ENCODE measurements at regions of chr18 and their contacts with region 1.

Region 1: GRCh38 chr18:46173393-46174341 is 69.5 kb downstream of the HAUS1 start:
- DNase-seq: peak; percentile 95
- ATAC-seq: peak; percentile 90
- H3K4me3 Mint-ChIP-seq: peak overlapping the region; percentile 97
- H3K27ac Mint-ChIP-seq: peak overlapping the region; percentile 99
- H3K4me1 Mint-ChIP-seq: peaks cover 63% of the 10 kb centered on the region
- H3K27me3 Mint-ChIP-seq: no peaks in the 10 kb centered on the region

Region 2: DNA sequence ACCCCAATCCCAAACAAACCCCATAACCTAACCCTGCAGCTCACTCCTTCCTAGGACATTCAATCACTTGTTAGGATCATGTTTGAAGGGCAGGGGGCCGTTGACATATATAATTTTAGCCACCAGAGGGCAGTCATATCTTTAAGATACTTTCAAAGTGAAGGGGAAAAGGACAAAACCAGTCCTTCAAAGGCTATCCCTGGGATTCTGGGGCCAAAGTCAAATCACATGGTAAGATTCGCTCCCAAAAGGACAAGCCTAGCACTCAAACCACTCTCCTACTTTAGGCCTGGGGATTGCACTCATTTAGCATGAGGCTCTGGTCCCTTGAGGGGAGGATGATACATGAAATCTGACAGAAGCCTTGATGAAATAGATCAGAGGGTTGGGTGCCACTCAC is 24.9 kb before region 1 on chr18:
- CTCF ChIA-PET with region 1: interaction called, 219 read pairs
- POLR2A ChIA-PET with region 1: interaction called, 9 read pairs
- DNase-seq: peak; percentile 75
- ATAC-seq: peak; percentile 53
- H3K4me3 Mint-ChIP-seq: no peak overlapping the region
- H3K27ac Mint-ChIP-seq: peak overlapping the region; percentile 65
- H3K4me1 Mint-ChIP-seq: peaks cover 49% of the 10 kb centered on the region
- H3K27me3 Mint-ChIP-seq: no peaks in the 10 kb centered on the region

Region 3: GRCh38 chr18:46213295-46213694 is 39.6 kb after region 1 on chr18:
- CTCF ChIA-PET with region 1: interaction called, 135 read pairs
- POLR2A ChIA-PET with region 1: interaction called, 22 read pairs
- DNase-seq: no peak
- ATAC-seq: no peak
- H3K4me3 Mint-ChIP-seq: no peak overlapping the region
- H3K27ac Mint-ChIP-seq: no peak overlapping the region
- H3K4me1 Mint-ChIP-seq: peaks cover 69% of the 10 kb centered on the region
- H3K27me3 Mint-ChIP-seq: no peaks in the 10 kb centered on the region

Region 4: DNA sequence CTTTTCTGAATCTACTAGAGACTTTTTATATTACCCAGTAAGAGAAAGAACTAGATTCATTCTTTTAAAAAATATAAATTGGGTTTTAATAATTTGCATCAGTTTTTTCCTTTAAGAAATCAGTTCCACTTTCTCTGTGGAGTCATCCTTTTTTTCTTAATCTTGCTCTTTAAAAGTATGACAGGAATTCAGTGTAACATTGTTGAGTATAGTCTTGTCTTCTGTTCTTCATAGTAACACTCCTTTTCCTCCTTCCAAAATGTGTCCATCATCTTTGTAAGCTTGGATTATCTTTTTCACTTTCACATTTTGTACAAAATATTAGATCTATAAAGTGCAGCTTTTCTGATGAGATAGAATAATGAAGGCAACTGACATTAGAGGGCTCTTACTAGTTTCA is 65.9 kb after region 1 on chr18:
- CTCF ChIA-PET with region 1: interaction called, 13 read pairs
- POLR2A ChIA-PET with region 1: no interaction called
- DNase-seq: no peak
- ATAC-seq: no peak
- H3K4me3 Mint-ChIP-seq: no peak overlapping the region
- H3K27ac Mint-ChIP-seq: no peak overlapping the region
- H3K4me1 Mint-ChIP-seq: peaks cover 18% of the 10 kb centered on the region
- H3K27me3 Mint-ChIP-seq: no peaks in the 10 kb centered on the region

Region 5: DNA sequence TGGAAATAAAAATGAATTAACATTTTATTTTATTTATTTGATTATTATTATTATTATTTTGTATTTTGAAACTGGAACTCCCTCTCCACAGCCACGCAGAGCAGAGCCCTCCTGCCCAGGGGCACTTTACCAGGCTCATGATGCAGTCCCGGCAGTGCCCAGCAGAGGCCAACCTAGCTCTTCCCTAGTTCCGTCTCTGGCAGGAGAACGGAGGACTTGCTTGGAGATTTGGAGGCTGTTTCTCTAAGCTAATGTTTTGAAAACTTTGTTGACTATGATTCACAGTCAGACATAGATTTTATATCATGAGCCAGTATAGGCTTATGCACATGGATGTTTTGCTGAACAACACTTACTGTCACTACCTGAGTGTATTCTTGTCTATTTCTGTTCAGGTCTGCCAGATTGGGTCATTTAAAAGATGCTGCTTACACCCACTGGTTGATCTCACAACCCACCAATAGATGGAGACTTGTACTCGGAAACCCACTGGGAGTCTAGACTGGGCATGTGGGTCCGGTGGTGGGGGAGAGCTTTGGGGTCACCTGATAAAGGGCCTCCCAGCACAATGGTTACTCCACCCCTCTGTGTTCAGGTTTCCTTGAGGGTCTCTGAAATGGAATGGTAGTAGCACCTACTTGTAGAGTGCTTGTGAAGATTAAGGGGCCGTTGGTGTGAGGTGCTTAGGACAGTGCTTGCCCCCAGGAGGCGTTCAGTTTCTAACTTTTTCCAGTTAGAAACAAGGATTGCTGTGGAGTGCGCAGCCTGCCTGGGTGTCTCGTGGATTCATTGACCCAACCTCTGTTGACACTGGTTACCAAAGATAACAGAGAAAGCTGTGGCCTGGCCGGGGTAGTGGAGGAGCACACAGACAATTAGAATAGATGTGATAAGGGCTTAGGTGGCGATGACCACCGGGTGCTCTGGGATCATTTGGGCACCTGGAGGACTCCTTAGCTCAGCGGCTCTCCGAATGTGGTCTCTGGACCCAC is 107.8 kb after region 1 on chr18:
- CTCF ChIA-PET with region 1: interaction called, 33 read pairs
- POLR2A ChIA-PET with region 1: interaction called, 3 read pairs
- DNase-seq: peak; percentile 74
- ATAC-seq: peak; percentile 87
- H3K4me3 Mint-ChIP-seq: no peak overlapping the region
- H3K27ac Mint-ChIP-seq: no peak overlapping the region
- H3K4me1 Mint-ChIP-seq: peaks cover 15% of the 10 kb centered on the region
- H3K27me3 Mint-ChIP-seq: no peaks in the 10 kb centered on the region

Region 6: GRCh38 chr18:46622999-46623398 is 449.3 kb after region 1 on chr18:
- CTCF ChIA-PET with region 1: interaction called, 25 read pairs
- POLR2A ChIA-PET with region 1: no interaction called
- DNase-seq: no peak
- ATAC-seq: peak; percentile 43
- H3K4me3 Mint-ChIP-seq: no peak overlapping the region
- H3K27ac Mint-ChIP-seq: peak overlapping the region; percentile 88
- H3K4me1 Mint-ChIP-seq: peaks cover 46% of the 10 kb centered on the region
- H3K27me3 Mint-ChIP-seq: peaks cover 2% of the 10 kb centered on the region